ENCODE measurements at regions of chr5 and their contacts with region 1.

Region 1: GRCh38 chr5:168947212-168947868 is 353.6 kb downstream of the SLIT3 start:
- DNase-seq: peak; percentile 24
- H3K4me3 ChIP-seq: no peak overlapping the region
- H3K27ac ChIP-seq: no peak overlapping the region
- H3K4me1 ChIP-seq: no peaks in the 10 kb centered on the region
- H3K27me3 ChIP-seq: no peaks in the 10 kb centered on the region
- CTCF ChIP-seq: peak; percentile 77 to 78

Region 2: DNA sequence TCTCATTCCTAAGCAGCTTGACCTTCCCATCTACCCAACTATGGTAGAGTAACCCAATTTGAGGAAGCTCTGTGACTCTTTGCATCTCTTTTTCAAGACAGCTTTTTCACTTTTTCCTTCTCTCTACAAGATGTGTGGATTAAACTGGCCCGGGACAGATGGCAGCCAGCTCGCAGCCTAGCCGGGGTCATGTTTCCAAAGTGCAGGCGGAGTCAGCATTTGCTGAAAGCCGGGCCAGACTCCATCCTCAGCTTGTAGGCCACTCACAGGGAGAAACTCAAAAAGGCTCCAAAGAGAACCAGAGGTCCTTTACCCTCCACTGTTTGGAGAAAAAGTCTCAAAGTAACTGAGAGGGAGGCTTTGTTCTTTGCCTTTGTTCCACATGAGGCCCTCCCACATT is 81.4 kb before region 1 on chr5:
- CTCF ChIA-PET with region 1: no interaction called
- dilution Hi-C with region 1: loop called (anchors 5 kb)
- in situ Hi-C with region 1: no loop called
- intact Hi-C with region 1: no loop called
- DNase-seq: no peak
- H3K4me3 ChIP-seq: no peak overlapping the region
- H3K27ac ChIP-seq: no peak overlapping the region
- H3K4me1 ChIP-seq: no peaks in the 10 kb centered on the region
- H3K27me3 ChIP-seq: no peaks in the 10 kb centered on the region
- CTCF ChIP-seq: no peak

Region 3: DNA sequence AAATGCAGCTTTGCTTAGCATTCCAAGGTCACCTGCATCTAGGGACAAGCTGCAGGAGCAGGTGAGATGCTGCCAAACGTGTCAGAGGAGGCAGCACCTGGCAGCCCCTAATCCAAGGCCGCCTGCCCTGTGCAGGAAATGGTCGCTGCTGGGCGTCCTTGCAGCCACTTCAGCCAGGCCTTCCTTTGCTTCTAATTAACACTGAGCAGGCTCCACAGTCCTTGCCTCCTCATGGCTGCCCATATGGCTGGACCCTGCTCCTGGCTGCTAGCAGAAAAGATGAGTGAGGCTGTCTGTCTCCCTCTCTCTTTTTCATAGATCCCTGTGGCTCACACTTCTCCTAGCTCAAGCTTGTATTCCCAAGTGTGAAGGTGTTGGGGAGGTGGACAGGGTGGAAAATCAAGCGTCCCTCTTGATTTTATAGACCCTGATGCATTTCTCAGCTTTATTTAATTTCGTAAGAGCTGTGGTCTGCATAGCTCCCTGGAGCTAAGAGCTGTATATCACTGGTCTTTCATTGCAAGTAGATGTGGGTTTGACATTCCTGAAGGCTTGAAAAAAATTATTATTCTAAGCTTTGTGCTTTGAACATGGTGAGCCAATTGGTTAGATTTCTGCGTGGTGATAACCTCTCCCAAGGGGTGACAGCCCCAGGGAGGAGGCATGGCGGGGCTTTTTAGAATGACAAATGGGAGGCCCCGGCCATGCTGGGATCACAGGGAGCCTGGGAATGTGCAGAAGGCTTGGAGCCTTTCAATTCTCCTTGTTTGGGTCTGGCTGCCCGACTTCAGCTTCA is 159.8 kb after region 1 on chr5:
- CTCF ChIA-PET with region 1: no interaction called
- dilution Hi-C with region 1: no loop called
- in situ Hi-C with region 1: no loop called
- intact Hi-C with region 1: no loop called
- DNase-seq: no peak
- H3K4me3 ChIP-seq: no peak overlapping the region
- H3K27ac ChIP-seq: no peak overlapping the region
- H3K4me1 ChIP-seq: peaks cover 7% of the 10 kb centered on the region
- H3K27me3 ChIP-seq: no peaks in the 10 kb centered on the region
- CTCF ChIP-seq: no peak

Region 4: GRCh38 chr5:169197343-169197742 is 250.0 kb after region 1 on chr5:
- CTCF ChIA-PET with region 1: no interaction called
- dilution Hi-C with region 1: no loop called
- in situ Hi-C with region 1: no loop called
- intact Hi-C with region 1: loop called (anchors 1 kb)
- DNase-seq: peak; percentile 24
- H3K4me3 ChIP-seq: no peak overlapping the region
- H3K27ac ChIP-seq: no peak overlapping the region
- H3K4me1 ChIP-seq: peaks cover 14% of the 10 kb centered on the region
- H3K27me3 ChIP-seq: no peaks in the 10 kb centered on the region
- CTCF ChIP-seq: peak; percentile 53 to 80

Measured in mammary epithelial cell (primary cell).